Right cardiac atrium (tissue), 5 donors: ENCODE measurements at regions of chr9 and their contacts with region 1.

Region 1: DNA sequence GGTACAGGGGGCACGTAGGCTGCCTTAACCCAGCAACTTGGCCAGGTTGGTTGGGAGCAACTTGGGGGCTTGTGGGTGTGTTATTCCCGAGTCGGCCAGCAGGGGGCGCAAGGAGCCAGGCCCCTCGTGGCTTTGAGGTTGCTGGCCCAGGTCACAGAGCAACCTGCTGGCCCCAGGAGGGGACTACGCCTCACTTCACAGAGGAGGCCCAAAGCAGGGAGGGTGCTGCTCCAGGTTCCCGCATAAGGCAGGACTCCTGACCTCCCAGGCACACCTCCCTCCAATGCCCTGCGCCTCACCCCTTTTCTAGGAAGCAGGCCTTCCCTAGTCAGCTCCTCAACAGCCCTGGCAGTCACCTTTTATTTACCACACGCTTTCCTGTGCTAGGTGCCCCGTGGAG is 18.1 kb downstream of the KYAT1 start:
- DNase-seq: peak; percentile 73 to 90 (median 89)
- ATAC-seq: peak; percentile 79 to 89
- H3K4me3 ChIP-seq: no peak overlapping the region
- H3K27ac ChIP-seq: no peak overlapping the region
- H3K4me1 ChIP-seq: no peaks in the 10 kb centered on the region
- H3K27me3 ChIP-seq: no peaks in the 10 kb centered on the region

Region 2: DNA sequence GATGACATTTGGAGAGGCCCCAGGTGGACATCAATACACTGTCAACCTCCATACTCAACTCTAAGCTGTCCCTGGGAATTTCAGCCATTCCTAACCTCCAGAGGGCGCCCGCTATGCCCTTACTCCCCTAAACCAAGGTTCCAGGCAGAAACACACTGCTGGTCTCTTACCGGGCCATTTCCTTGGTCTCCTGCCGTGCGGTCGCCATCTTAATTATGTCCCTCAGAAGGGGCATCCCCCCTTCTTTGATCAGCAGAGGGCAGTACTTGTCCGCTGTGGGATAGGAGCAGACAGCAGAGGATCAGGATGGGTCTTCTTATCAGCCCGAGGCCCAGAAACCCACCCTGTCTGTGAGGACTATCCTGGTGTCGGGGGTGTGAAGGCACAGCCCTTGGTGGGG is 130.4 kb before region 1 on chr9:
- intact Hi-C with region 1: no loop called
- DNase-seq: peak; percentile 73 to 84 (median 79)
- ATAC-seq: peak; percentile 56 to 82
- H3K4me3 ChIP-seq: no peak overlapping the region
- H3K27ac ChIP-seq: peak overlapping the region; percentile 39
- H3K4me1 ChIP-seq: no peaks in the 10 kb centered on the region
- H3K27me3 ChIP-seq: no peaks in the 10 kb centered on the region

Region 3: GRCh38 chr9:128927731-128928411 is 64.2 kb after region 1 on chr9:
- intact Hi-C with region 1: loop called (anchors 2 to 5 kb)
- DNase-seq: peak in 1 of 3 donors; percentile 73
- ATAC-seq: peak; percentile 71 to 75
- H3K4me3 ChIP-seq: no peak overlapping the region
- H3K27ac ChIP-seq: no peak overlapping the region
- H3K4me1 ChIP-seq: no peaks in the 10 kb centered on the region
- H3K27me3 ChIP-seq: no peaks in the 10 kb centered on the region

Region 4: GRCh38 chr9:129121483-129121882 is 257.8 kb after region 1 on chr9:
- intact Hi-C with region 1: no loop called
- DNase-seq: peak in 1 of 3 donors; percentile 8
- ATAC-seq: no peak
- H3K4me3 ChIP-seq: no peak overlapping the region
- H3K27ac ChIP-seq: no peak overlapping the region
- H3K4me1 ChIP-seq: no peaks in the 10 kb centered on the region
- H3K27me3 ChIP-seq: no peaks in the 10 kb centered on the region

Region 5: DNA sequence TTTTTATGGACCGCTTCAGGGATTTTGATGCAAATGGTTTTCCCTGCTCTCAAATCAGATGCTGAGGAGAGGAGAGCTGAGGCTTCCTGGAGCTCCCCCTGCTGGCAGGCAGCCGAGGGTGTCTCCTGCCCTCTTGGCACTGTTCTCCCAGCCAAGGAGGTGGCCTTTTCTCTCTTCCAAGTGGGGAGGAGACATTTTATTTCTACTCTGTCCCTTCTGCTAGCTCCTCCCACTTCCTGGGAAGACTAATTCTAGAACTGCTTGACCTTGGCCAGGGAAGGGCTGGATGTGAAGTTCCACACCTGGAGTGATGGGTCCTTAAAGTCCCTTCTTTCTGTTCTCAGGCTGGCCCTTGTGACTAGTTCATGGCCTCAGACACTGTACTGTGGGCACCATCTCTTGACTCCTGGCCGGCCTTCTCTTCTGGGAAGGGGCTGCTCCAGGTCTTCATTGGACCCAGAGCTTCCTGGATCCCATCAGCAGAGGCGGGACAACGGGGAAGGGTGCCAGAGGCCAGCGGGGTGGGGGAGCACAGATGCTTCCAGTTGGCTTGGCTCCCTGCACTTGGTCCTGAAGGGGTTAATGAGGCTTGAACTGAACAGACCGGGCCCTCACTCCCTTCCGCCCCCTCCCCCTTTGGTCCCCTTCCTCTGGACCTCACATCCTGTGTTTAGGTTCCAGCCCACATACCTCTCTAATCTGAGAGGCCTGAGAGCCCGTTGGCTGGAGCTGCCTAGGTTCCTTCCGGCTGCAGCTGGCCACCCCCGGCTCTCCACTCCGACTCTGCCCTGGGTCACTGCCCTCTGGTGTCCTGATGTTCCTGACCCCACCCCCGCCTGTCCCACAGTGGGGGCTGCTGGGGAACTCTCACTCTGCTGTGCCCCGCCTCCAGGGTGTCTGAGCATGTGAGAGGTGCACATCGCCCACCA is 279.6 kb after region 1 on chr9:
- intact Hi-C with region 1: no loop called
- DNase-seq: peak; percentile 92 to 96 (median 96)
- ATAC-seq: peak; percentile 23 to 59
- H3K4me3 ChIP-seq: no peak overlapping the region
- H3K27ac ChIP-seq: peak overlapping the region; percentile 95
- H3K4me1 ChIP-seq: peaks cover 30% of the 10 kb centered on the region
- H3K27me3 ChIP-seq: no peaks in the 10 kb centered on the region